Activated CD4-positive, alpha-beta T cell treated with anti-CD3 and anti-CD28 coated beads, Interleukin-2, amount 10 ng/mL, durations not matched to agents 24 days and 14 days (primary cell): ENCODE measurements at regions of chr19 and their contacts with region 1.

Region 1: GRCh38 chr19:39970675-39971379 is at the start of gene PSMC4:
- DNase-seq: peak; percentile 100
- H3K4me3 Mint-ChIP-seq: peak within 1 kb of the TSS; percentile 95
- H3K27ac Mint-ChIP-seq: peak within 1 kb of the TSS; percentile 98
- H3K4me1 Mint-ChIP-seq: peaks cover 57% of the 10 kb centered on the region
- H3K27me3 Mint-ChIP-seq: no peaks in the 10 kb centered on the region
- total RNA-seq, gene PSMC4: 192 and 193 TPM in 2 replicates

Region 2: DNA sequence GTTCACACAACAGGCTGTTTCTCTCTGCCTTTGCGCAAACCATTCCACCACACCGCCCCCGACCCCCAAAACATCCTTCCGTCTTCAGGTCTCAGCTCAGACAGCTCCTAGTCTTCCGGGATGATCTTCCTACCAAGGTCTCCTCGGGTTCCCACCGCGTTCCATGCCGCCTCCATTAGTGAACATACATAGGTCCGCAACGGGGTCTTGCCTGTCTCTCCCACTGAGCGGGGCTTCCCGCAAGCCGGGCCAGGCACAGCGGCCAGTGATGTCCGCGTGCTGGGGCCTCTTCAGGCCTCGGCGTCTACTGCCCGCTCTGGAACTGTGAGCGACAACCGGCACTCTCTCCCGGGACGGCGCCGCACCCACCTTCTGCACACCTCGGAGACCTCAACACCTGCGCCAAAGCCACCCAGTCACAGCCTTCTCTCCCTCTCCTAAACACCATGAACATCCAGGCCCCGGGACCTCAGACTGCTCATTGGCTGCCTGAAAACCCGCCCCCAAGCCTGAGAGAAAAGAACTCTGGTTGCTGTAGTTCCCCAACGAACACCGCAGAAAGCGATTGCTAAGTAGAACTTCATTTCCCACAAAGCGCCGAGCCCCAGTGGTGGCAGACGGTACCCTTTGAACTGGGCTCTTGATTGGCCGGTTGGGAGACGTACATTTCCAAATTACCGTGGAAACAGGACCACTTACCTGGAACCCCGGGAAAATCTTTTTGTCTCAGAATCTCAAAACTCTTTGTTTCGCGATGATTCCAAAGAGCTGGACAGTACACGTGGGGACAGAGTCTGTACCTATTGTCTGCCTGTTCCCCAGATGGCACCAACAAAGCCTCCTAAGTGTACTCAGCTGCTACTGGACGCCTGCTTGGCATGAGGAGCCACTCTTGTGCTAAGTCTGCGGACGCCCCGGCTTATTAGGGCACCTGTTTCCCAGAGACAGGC is 146.4 kb before region 1 on chr19:
- intact Hi-C with region 1: loop called (anchors 1 kb)
- DNase-seq: peak; percentile 96
- H3K4me3 Mint-ChIP-seq: no peak overlapping the region
- H3K27ac Mint-ChIP-seq: no peak overlapping the region
- H3K4me1 Mint-ChIP-seq: peaks cover 5% of the 10 kb centered on the region
- H3K27me3 Mint-ChIP-seq: no peaks in the 10 kb centered on the region

Region 3: GRCh38 chr19:39906820-39907611 is 63.8 kb before region 1 on chr19:
- intact Hi-C with region 1: loop called (anchors 5 kb)
- DNase-seq: no peak
- H3K4me3 Mint-ChIP-seq: no peak overlapping the region
- H3K27ac Mint-ChIP-seq: no peak overlapping the region
- H3K4me1 Mint-ChIP-seq: peaks cover 5% of the 10 kb centered on the region
- H3K27me3 Mint-ChIP-seq: no peaks in the 10 kb centered on the region

Region 4: DNA sequence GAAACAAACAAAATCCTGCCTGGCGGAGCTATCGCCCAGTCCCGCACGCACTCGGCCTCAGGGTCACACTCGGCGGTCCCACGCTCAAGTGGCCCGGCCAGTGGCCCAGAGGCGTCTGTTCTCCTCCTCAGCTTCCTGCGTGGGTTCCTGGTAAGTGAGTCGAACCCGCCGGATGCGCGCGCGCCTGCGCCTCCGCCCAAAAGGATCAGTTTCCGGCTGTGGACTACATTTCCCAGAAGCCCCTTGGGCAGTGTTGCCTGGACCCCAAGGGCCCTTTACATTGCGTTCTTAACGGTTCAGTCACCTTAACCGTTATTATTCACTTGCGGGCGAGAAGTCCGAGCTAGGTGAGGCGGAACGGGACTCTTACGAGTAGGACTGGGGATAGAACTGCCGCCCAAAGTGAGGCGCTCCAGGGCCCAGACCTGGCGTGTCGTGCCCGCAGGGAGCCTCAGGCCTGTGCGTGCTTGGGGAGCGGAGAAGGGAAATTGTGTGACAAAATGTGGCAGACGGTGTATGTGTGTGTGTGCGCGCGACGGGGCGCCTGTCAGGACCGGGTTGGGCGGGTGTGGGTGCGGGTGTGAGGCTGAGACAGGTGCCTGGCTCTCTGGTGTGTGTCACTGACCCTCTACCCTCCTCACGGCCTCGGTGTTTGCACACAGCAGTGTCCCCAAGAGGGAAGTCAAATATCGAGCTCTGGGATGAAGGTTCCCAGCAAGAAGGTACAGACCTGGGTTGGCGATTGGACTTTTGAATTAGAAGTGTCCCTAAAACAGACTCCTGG is 26.2 kb after region 1 on chr19 and contains the start of gene ZNF546:
- intact Hi-C with region 1: loop called (anchors 1 kb)
- DNase-seq: peak; percentile 97
- H3K4me3 Mint-ChIP-seq: peak within 1 kb of the TSS; percentile 90
- H3K27ac Mint-ChIP-seq: peak within 1 kb of the TSS; percentile 95
- H3K4me1 Mint-ChIP-seq: peaks cover 24% of the 10 kb centered on the region
- H3K27me3 Mint-ChIP-seq: no peaks in the 10 kb centered on the region
- total RNA-seq, gene ZNF546: 4.4 and 6.7 TPM in 2 replicates

Region 5: GRCh38 chr19:40090241-40091204 is 119.7 kb after region 1 on chr19 and contains the start of gene ZNF780A:
- intact Hi-C with region 1: loop called (anchors 1 kb)
- DNase-seq: peak; percentile 94
- H3K4me3 Mint-ChIP-seq: peak within 1 kb of the TSS; percentile 97
- H3K27ac Mint-ChIP-seq: peak within 1 kb of the TSS; percentile 97
- H3K4me1 Mint-ChIP-seq: peaks cover 25% of the 10 kb centered on the region
- H3K27me3 Mint-ChIP-seq: peaks cover 3% of the 10 kb centered on the region
- total RNA-seq, gene ZNF780A: 14.7 and 16.1 TPM in 2 replicates

Region 6: GRCh38 chr19:40128991-40129390 is 158.2 kb after region 1 on chr19:
- intact Hi-C with region 1: no loop called
- DNase-seq: no peak
- H3K4me3 Mint-ChIP-seq: no peak overlapping the region
- H3K27ac Mint-ChIP-seq: no peak overlapping the region
- H3K4me1 Mint-ChIP-seq: no peaks in the 10 kb centered on the region
- H3K27me3 Mint-ChIP-seq: peaks cover 52% of the 10 kb centered on the region

Region 7: DNA sequence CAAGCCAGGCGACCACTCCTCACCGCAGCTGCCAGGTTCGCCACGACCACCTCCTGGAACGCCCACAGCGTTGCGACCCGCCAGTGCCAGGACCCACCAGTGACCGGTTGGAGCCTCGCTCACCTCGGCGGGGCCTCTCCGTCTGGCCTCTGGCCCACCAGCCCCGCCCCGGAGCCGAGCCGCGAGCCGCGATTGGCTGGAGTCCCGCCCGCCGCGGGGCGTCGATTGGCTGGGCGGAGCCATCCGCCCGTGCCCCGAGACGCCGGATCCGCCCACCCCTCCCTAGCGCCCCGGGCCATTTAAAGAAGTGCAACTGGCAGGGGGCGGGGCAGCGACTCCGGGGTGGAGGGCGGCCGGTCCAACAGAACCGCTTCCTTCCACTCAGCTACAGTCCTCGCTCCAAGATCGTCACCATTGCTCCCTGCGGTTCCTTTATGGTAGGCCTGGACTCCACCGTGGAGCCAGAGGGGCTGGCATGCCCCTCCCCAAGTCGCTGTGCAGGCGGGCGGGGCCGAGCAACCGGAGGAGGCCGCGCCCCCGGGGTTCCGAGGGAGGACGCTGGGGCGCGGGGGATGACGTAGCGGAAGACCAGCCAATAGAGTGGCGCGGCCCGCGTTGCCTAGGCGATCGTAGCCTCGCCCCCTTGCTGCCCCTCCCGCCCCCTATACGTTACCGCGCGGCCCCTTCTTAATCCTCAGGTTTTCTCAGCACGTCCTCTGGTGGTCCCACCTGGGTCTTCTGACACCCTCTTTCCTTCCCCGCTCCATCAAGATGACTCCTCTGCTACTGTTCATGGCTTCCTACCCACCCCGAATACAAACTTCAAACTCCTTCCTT is 473.6 kb after region 1 on chr19 and contains the start of gene SERTAD3:
- intact Hi-C with region 1: loop called (anchors 5 kb)
- DNase-seq: peak; percentile 99
- H3K4me3 Mint-ChIP-seq: peak within 1 kb of the TSS; percentile 98
- H3K27ac Mint-ChIP-seq: peak within 1 kb of the TSS; percentile 96
- H3K4me1 Mint-ChIP-seq: peaks cover 14% of the 10 kb centered on the region
- H3K27me3 Mint-ChIP-seq: no peaks in the 10 kb centered on the region
- total RNA-seq, gene SERTAD3: 10.8 and 12.5 TPM in 2 replicates